A673 (cell line): ENCODE measurements at regions of chr2 and their contacts with region 1.

Region 1: GRCh38 chr2:33288011-33288410 is 188.4 kb upstream of the RASGRP3 start:
- DNase-seq: no peak
- H3K4me3 ChIP-seq: no peak overlapping the region
- H3K27ac ChIP-seq: no peak overlapping the region
- H3K4me1 ChIP-seq: no peaks in the 10 kb centered on the region
- H3K27me3 ChIP-seq: no peaks in the 10 kb centered on the region
- CTCF ChIP-seq: no peak

Region 2: DNA sequence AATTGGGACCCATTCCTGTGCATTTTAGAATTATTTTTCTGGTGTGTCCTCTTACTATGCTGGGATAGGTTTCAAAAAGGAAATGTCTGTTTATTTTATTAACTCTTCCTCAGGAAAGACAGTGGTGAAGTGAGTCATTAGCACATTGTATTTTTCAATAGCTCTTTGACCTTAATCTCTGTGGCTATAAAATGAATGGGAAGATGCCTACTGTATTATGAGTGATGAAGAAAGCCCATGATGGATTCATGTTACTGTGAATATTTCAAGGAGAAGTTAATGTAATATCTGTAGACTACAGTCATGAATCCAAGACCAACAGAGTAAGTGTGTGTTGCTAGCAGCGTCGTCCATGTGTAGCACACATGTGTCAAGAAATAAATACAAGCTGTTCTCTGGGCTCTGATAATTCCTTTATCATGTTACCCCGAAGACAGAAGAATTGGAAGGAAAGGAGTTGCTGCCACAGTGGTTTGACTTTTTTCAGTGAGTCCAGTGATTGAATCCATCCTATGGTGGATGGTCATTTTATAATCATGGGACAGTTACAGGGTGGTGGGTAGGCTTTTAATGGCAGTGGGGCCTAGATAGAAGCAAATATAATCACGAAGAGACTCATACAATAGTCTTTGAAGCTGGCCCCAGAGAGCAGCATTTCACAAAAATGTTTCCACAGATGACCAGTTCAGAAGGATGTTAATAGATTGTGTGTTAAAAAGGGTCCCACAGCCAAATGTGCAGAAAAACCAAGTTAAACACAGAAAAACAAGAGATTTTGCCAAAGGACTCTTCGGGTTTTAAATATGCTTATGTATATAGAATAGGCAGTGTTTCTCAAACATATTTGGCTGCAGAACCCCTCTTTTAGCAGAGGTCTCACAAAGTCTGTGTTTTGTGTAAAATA is 51.3 kb before region 1 on chr2:
- CTCF ChIA-PET with region 1: no interaction called
- POLR2A ChIA-PET with region 1: interaction called, 11 read pairs
- intact Hi-C with region 1: no loop called
- DNase-seq: no peak
- H3K4me3 ChIP-seq: no peak overlapping the region
- H3K27ac ChIP-seq: no peak overlapping the region
- H3K4me1 ChIP-seq: no peaks in the 10 kb centered on the region
- H3K27me3 ChIP-seq: peaks cover 13% of the 10 kb centered on the region
- CTCF ChIP-seq: no peak